Gastrocnemius medialis (tissue), 4 donors: ENCODE measurements at regions of chr15 and their contacts with region 1.

Region 1: GRCh38 chr15:49225613-49226281 is 55.7 kb downstream of the GALK2 start:
- DNase-seq: no peak
- ATAC-seq: no peak
- H3K4me3 ChIP-seq: no peak overlapping the region
- H3K27ac ChIP-seq: no peak overlapping the region
- H3K4me1 ChIP-seq: peaks cover 4 to 5% of the 10 kb centered on the region in 2 donors
- H3K27me3 ChIP-seq: no peaks in the 10 kb centered on the region
- CTCF ChIP-seq: no peak
- POLR2A ChIP-seq: no peak

Region 2: GRCh38 chr15:49370782-49371181 is 145.0 kb after region 1 on chr15:
- in situ Hi-C with region 1: no loop called
- intact Hi-C with region 1: no loop called
- DNase-seq: no peak
- ATAC-seq: no peak
- H3K4me3 ChIP-seq: no peak overlapping the region
- H3K27ac ChIP-seq: no peak overlapping the region
- H3K4me1 ChIP-seq: no peaks in the 10 kb centered on the region
- H3K27me3 ChIP-seq: no peaks in the 10 kb centered on the region
- CTCF ChIP-seq: no peak
- POLR2A ChIP-seq: no peak

Region 3: DNA sequence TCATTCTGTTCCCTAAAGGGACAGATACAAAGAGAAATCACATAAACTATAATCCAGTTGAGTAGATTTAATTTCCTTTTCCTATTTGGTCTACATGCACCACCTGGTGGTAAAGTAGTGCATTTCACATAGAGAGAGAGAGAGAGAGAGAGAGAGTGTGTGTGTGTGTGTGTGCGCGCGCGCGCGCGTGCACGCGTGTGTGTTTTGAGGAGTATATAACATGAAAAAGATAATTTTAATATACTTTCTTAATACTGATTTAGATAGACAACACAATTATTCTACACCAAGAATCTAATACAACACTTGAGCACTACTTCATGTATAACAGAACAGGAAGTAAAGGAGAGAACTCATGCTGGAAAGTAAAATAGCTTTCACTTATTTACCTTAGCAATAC is 196.2 kb after region 1 on chr15:
- in situ Hi-C with region 1: loop called (anchors 5 to 10 kb)
- intact Hi-C with region 1: no loop called
- DNase-seq: peak in 1 of 2 donors; percentile 20
- ATAC-seq: peak; percentile 51 to 92
- H3K4me3 ChIP-seq: peak overlapping the region; percentile 30 to 40 (median 38)
- H3K27ac ChIP-seq: peak overlapping the region; percentile 1 to 59 (median 19)
- H3K4me1 ChIP-seq: no peaks in the 10 kb centered on the region
- H3K27me3 ChIP-seq: no peaks in the 10 kb centered on the region
- CTCF ChIP-seq: peak; percentile 81 to 96 (median 82)
- POLR2A ChIP-seq: no peak